ENCODE measurements at regions of chr12 and their contacts with region 1.

Region 1: GRCh38 chr12:107131832-107132616 is 38.7 kb upstream of the CRY1 start:
- DNase-seq: no peak
- ATAC-seq: peak; percentile 66

Region 2: GRCh38 chr12:107607464-107608392 is 475.7 kb after region 1 on chr12:
- intact Hi-C with region 1: loop called (anchors 5 kb)
- DNase-seq: peak; percentile 89
- ATAC-seq: peak; percentile 84